Esophagus muscularis mucosa (tissue), 4 donors: ENCODE measurements at regions of chr12 and their contacts with region 1.

Region 1: DNA sequence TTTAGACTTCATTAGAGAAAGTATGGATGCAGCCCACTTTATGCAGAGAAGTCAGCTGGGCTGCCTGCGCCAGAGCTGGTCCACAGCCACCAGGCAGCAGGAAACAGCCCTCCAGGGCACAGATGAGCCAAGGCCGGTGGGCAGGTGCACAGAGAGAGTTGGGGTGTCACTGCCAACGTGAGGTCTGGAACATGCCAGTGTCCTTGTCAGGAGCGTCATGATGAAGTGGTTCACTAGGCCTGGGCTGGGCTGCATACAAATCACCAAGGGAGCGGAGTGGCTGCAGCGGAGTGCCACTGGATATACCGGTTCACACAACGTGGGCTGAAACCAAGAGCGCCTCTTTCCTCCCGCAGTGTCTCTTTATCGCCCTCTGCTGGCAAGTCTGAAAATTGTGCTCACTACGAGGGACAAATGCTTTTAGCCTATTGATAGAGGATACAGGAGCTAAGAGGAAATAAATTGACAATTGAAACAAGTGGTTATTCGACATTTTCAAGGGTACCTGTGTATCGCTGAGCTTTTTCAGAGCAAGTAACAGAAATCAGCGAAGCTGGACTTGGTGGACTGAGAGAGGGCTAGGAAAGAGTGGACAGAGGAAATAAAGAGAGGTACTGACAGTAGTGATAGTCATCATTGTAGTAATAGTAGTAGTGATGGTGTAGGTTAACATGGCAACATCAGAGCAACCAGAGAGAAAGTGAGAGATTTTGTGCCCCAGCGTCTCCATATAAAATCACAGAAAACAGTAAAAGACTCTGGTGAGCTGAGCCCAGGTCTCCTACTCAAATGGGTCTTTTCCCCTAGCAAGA is 52.0 kb upstream of the ITPR2 start:
- DNase-seq: peak; percentile 95
- H3K4me3 ChIP-seq: peak overlapping the region in 1 of 4 donors; percentile 15
- H3K27ac ChIP-seq: no peak overlapping the region
- H3K4me1 ChIP-seq: peaks cover 3 to 9% (median 5%) of the 10 kb centered on the region in 4 donors
- H3K27me3 ChIP-seq: no peaks in the 10 kb centered on the region
- CTCF ChIP-seq: peak in 2 of 3 experiments; percentile 88 to 94
- EP300 ChIP-seq: no peak
- POLR2A ChIP-seq: no peak

Region 2: DNA sequence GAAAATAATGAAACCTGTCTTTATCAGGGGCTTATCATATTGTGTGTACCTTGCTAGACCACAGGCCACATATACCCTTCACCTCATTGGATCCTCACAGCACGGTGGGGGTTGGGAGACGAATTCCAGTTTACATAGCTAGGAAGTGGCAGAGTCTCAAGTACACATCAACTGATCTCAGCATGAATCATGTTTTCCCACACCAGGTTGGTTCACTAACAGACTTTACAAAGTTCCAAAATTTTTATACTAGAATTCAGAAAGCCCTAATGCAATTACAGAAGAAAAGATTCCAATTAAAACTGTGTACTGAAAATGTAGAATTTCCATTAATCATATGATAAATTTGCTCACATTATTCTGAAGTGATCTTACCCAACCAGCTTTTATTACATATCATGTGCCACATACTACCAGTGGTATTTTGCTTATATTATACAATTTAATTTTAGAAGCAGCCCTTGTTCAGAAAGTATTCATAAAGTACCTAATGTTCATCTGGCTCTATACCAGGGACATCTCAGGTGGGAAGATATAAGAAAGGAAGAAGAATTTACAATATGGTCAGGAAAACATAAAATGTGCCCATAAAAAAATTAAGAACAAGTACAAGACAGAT is 248.2 kb before region 1 on chr12:
- intact Hi-C with region 1: no loop called
- DNase-seq: no peak
- H3K4me3 ChIP-seq: no peak overlapping the region
- H3K27ac ChIP-seq: peak overlapping the region; percentile 42 to 68 (median 60)
- H3K4me1 ChIP-seq: peaks cover 0 to 74% (median 60%) of the 10 kb centered on the region in 4 donors
- H3K27me3 ChIP-seq: no peaks in the 10 kb centered on the region
- CTCF ChIP-seq: no peak
- EP300 ChIP-seq: peak; percentile 28
- POLR2A ChIP-seq: no peak

Region 3: DNA sequence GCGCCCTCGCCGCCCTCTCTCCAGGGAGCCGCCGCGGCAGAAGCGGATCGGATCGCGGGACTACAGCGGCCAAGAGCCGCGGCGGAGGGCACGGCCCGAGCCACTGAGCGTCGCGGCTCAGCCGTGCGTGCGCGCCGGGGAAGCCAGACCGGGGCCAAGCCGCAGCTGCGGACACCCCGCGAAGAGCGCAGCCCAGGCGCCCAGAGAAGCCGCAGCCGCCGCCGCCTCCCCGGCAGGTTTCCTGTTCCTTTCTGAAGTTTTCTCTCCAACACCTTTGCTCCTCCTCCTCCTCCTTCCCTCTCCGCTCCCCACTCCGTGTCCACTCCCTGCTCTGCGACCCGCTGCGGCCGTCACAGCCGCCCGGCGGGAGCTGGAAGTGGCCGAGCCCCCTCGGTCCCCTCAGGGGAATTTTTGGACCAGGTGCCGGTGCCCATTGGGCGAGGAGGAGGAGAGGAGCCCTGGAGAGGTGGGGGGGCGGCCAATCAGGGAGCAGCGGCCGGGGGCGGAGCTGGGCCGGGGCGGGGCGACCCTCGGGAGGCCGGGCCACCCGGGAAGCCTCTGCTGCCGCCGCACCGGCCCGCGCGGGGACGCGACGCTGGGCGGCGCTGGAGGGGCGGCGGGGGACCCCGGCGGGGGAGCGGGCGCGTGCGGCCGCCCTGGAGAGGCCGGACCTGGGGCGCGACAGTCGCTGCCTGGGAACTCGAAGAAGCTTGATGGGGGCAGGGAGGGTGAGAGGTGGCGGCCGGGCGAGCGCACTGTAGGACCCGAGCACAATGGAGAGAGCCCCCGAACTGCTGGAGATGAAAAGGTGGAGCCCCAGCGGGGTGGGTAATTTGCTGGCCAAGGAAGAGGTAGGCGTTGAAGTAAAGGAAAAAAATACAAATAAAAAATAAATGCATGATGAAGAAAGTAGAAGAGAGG is 51.9 kb before region 1 on chr12 and contains the start of gene ITPR2:
- intact Hi-C with region 1: loop called (anchors 10 kb)
- DNase-seq: peak; percentile 97
- H3K4me3 ChIP-seq: peak within 1 kb of the TSS; percentile 76 to 96 (median 94)
- H3K27ac ChIP-seq: peak within 1 kb of the TSS; percentile 95 to 98 (median 96)
- H3K4me1 ChIP-seq: peaks cover 15 to 26% (median 19%) of the 10 kb centered on the region in 4 donors
- H3K27me3 ChIP-seq: no peaks in the 10 kb centered on the region
- CTCF ChIP-seq: peak in 2 of 3 experiments; percentile 40 to 49
- EP300 ChIP-seq: no peak
- POLR2A ChIP-seq: peak; percentile 49
- total RNA-seq, gene ITPR2: 23.7 to 26.6 (median 25.4) TPM

Region 4: GRCh38 chr12:26853303-26854030 is 31.5 kb before region 1 on chr12:
- intact Hi-C with region 1: loop called (anchors 1 kb)
- DNase-seq: peak; percentile 91
- H3K4me3 ChIP-seq: no peak overlapping the region
- H3K27ac ChIP-seq: no peak overlapping the region
- H3K4me1 ChIP-seq: peaks cover 0 to 10% (median 3%) of the 10 kb centered on the region in 4 donors
- H3K27me3 ChIP-seq: no peaks in the 10 kb centered on the region
- CTCF ChIP-seq: peak; percentile 85 to 93 (median 86)
- EP300 ChIP-seq: no peak
- POLR2A ChIP-seq: no peak

Region 5: DNA sequence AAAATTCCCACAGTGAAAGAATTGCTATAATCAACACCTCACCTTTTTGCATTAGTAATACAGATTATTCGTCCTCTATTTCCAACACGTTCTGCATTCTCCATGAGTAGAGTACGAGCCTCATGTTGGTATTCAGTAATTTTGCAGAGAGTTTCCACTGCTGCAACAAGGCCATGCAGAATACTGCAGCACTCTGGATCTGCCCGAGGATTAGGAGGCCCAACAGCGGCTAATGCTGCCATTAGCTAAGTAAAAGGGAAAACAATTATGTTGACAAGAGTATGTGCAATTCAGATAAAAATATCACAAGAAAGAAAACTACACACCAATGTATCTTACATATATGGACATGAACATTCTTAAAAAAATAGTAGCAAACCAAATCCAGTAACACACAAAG is 43.7 kb after region 1 on chr12:
- intact Hi-C with region 1: no loop called
- DNase-seq: no peak
- H3K4me3 ChIP-seq: no peak overlapping the region
- H3K27ac ChIP-seq: no peak overlapping the region
- H3K4me1 ChIP-seq: no peaks in the 10 kb centered on the region
- H3K27me3 ChIP-seq: no peaks in the 10 kb centered on the region
- CTCF ChIP-seq: no peak
- EP300 ChIP-seq: no peak
- POLR2A ChIP-seq: no peak